Right ventricle myocardium superior (tissue), 1 donor: ENCODE measurements at regions of chr22 and their contacts with region 1.

Region 1: DNA sequence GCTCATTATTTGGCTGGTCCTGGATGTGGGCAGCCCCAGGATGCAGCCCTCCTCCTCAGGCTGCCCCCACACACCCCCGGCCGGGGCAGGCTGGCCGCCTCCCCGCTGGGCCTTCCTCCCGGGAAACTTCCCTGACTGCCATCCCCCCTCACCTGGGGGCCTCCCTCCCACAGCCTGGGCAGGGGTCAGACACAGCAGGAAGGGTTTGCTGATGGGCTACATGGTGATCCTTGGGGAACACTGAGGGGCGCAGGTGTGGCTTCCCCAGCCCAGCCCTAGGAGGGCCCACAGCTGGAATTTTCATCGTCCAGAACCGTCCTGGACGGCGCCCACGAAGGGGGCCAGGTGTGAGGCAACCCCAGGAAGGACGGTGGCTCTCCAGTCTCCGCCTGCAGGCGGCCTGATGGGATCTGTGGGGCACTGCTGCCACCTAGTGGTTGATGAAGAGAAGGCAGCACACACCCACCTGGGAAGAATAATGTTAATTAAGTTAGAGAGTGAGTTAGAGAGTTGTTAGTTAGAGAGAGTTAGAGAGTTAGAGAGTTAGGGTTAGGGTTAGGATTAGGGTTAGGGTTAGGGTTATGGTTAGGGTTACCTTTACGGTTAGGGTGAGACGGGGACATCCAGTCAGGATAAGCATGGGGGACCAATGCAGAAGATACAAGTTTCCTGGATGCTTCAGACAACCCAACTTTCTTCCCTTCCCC is 75.9 kb upstream of the PRR5 start:
- DNase-seq: peak; percentile 79
- ATAC-seq: peak; percentile 83

Region 2: DNA sequence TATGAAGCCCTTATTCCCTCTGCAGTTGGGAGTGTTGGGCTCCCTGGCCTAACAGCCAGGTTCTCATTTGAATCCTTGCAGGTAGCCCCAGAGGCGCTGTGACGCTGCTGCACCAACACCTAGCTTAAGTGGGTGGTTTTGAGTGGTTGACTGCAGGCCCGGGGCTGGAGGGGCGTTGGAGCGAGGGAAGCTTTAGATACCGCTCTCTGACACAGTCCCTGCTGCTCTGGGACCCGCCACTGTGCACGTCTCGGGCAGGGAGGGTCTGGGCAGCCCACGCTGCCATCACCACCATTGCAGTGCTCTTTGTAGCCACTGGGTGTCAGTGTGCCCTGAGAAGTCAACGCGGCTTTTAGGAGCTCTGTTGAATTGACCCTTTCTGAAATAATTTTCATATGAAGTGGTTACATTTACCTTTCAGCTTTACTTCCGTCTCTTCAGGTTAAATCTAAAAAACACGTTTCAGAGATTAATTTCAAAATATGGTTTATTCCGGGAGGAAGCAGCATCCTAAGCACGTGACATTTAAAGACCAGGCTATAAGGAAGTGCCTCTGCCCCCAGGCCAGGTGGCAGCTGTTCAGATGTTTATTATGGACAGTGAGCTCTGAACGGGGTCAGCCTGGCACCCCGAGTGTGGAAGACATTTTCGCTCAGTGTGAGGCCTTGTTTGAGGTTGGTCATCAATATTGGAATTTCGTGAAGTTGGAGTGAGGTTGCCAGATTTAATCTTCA is 632.9 kb before region 1 on chr22:
- intact Hi-C with region 1: loop called (anchors 5 kb)
- DNase-seq: peak; percentile 73
- ATAC-seq: peak; percentile 78

Region 3: DNA sequence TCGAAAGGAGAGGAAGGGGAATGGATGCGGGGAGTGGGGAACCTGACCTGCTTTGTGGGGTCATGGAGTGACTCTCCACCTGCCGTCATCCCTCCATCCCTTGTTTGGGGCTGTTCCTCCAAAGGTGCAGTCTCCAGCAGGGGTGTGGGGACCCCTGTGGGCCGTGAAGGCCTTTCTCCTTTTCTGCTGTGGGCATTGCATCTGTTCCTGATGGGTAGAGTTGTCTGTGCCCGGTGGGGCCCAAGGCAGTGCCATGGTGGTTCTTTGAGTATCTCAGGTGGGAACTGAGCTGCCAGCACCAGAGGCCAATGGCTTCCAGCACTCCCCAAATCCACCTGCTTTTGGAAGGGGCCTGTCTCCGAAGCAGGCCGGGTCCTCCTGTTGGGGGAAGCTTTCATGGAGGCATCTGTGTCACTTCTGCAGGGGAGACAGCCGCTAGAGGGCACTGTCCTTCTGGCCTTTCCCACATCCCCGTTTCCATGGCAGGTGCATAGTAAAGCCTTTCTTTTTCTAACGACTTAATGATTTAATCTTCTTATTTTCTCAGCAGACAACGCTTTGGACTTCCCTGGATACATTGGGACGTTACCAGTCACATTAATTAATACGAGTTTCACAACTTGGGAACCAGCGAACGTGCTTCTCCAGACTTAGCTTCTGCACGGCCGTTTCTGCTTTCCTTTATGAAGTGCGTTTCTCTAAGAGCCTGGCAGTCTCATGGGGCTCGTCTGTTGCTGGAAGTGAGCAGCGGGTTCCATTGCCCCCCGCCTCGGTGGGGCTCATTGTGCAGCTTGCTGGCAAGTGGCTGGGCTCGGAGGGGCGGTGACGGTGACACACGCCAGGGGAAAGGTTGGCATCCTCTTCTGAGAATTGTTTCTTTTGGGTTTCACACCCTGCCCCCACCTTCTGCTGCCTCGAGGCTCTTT is 544.9 kb before region 1 on chr22:
- intact Hi-C with region 1: loop called (anchors 5 kb)
- DNase-seq: peak; percentile 83
- ATAC-seq: no peak

Region 4: GRCh38 chr22:44337678-44338004 is 288.5 kb before region 1 on chr22:
- intact Hi-C with region 1: loop called (anchors 10 kb)
- DNase-seq: no peak
- ATAC-seq: peak; percentile 52

Region 5: GRCh38 chr22:44473166-44473565 is 153.0 kb before region 1 on chr22:
- intact Hi-C with region 1: no loop called
- DNase-seq: no peak
- ATAC-seq: no peak

Region 6: GRCh38 chr22:44586999-44587736 is 39.0 kb before region 1 on chr22:
- intact Hi-C with region 1: no loop called
- DNase-seq: peak; percentile 17
- ATAC-seq: no peak